ENCODE measurements at regions of chr3 and their contacts with region 1.

Region 1: DNA sequence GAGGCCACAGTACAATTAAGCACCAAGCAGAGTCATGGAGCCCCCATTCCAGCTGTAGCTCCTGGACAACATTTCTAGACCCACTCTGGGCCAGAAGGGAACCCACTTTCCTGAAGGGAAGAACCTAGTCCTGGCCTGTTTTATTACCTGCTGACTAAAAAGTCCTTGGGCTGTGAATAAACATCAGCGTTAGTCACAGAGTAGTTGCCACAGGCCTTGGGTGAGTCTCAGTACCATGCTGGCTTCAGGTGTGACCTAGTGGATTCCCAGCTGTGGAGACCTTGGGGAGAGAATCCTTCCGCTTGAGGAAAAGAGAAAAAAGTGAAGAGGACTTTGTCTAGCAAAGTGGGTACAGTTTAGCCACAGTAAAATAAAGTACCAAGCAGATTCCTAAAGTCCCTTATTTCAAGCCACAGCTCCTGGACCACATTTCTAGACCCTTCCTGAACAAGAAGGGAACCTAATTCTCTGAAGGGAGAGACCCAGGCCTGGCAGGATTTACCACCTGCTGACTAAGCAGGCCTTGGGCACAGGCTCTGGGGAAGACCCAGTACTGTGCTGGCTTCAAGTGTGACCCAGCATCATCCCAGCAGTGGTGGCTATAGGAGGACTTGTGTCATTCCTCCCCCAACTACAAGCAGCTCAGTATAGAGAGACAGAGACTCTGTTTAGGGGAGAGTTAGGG is 118.3 kb upstream of the KCNH8 start:
- DNase-seq: no peak
- ATAC-seq: peak; percentile 26
- H3K4me3 ChIP-seq: no peak overlapping the region
- H3K27ac ChIP-seq: no peak overlapping the region
- H3K4me1 ChIP-seq: no peaks in the 10 kb centered on the region
- H3K27me3 ChIP-seq: no peaks in the 10 kb centered on the region

Region 2: DNA sequence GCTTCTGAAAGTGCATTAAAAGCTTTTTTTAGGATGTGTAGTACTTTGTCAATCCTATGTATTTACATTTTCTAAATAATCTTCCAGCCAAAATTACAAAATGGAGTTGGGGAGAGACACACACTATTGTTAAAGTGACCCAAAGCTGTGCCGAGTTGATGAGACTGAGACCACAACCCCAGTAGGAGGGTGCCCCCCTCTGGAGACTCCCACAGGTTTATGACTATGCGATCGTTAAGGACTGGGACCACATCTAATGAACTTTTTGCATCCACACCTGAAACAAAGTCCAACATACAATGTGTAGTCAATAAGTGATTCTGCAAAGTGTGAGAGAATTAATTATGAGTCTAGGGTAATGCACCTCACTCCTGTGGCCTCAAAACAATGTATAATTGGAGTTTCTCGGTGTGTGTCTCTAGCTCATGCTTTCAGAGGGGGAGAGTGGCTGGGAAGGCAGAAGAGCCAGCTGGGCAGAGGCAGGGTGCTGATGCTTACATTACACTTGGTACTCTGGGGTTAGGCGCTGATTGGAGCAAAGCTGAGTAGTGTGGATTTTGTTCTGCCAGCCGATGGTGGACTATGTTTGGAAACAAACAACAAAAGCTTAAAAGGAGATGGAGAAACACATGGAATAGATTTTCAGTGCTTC is 221.1 kb after region 1 on chr3:
- intact Hi-C with region 1: loop called in 1 of 2 experiments (anchors 5 kb)
- DNase-seq: no peak
- ATAC-seq: no peak
- H3K4me3 ChIP-seq: no peak overlapping the region
- H3K27ac ChIP-seq: no peak overlapping the region
- H3K4me1 ChIP-seq: no peaks in the 10 kb centered on the region
- H3K27me3 ChIP-seq: no peaks in the 10 kb centered on the region

Region 3: GRCh38 chr3:19920401-19921075 is 890.6 kb after region 1 on chr3:
- intact Hi-C with region 1: no loop called
- DNase-seq: no peak
- ATAC-seq: no peak
- H3K4me3 ChIP-seq: no peak overlapping the region
- H3K27ac ChIP-seq: no peak overlapping the region
- H3K4me1 ChIP-seq: no peaks in the 10 kb centered on the region
- H3K27me3 ChIP-seq: no peaks in the 10 kb centered on the region